Pancreas (tissue), 10 donors: ENCODE measurements at regions of chr9 and their contacts with region 1.

Region 1: GRCh38 chr9:113657703-113658544 is 194.4 kb downstream of the RGS3 start:
- DNase-seq: peak; percentile 76 to 93 (median 90)
- ATAC-seq: peak; percentile 91 to 95 (median 93)
- H3K4me3 ChIP-seq: no peak overlapping the region
- H3K27ac ChIP-seq: no peak overlapping the region
- H3K4me1 ChIP-seq: no peaks in the 10 kb centered on the region
- H3K27me3 ChIP-seq: no peaks in the 10 kb centered on the region
- CTCF ChIP-seq: peak; percentile 83 to 98 (median 93)

Region 2: DNA sequence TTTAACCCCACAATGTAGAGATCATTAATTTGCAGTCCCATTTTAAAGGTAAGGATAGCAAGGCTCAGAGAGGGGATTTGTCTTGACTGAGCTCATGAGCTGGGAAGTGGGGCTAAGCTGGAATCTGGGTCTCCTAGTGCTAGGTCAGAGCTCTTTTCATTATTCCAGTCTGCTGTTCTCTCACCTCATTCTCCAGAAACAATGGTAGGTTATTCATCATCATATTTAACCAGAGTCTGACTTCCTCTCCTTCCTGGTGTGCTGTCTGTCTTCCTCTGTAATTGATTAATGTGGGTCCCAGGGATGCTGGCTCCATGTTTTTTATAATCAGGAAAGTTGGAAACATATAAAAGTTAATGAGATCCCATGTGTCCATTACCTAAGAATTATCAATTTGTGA is 226.7 kb before region 1 on chr9:
- intact Hi-C with region 1: loop called in 2 of 3 experiments (anchors 5 kb)
- DNase-seq: no peak
- ATAC-seq: no peak
- H3K4me3 ChIP-seq: no peak overlapping the region
- H3K27ac ChIP-seq: no peak overlapping the region
- H3K4me1 ChIP-seq: no peaks in the 10 kb centered on the region
- H3K27me3 ChIP-seq: no peaks in the 10 kb centered on the region
- CTCF ChIP-seq: no peak

Region 3: GRCh38 chr9:113446323-113446740 is 211.6 kb before region 1 on chr9:
- intact Hi-C with region 1: loop called (anchors 2 to 10 kb)
- DNase-seq: no peak
- ATAC-seq: peak; percentile 64 to 85 (median 78)
- H3K4me3 ChIP-seq: no peak overlapping the region
- H3K27ac ChIP-seq: no peak overlapping the region
- H3K4me1 ChIP-seq: no peaks in the 10 kb centered on the region
- H3K27me3 ChIP-seq: no peaks in the 10 kb centered on the region
- CTCF ChIP-seq: peak; percentile 41 to 59 (median 52)

Region 4: DNA sequence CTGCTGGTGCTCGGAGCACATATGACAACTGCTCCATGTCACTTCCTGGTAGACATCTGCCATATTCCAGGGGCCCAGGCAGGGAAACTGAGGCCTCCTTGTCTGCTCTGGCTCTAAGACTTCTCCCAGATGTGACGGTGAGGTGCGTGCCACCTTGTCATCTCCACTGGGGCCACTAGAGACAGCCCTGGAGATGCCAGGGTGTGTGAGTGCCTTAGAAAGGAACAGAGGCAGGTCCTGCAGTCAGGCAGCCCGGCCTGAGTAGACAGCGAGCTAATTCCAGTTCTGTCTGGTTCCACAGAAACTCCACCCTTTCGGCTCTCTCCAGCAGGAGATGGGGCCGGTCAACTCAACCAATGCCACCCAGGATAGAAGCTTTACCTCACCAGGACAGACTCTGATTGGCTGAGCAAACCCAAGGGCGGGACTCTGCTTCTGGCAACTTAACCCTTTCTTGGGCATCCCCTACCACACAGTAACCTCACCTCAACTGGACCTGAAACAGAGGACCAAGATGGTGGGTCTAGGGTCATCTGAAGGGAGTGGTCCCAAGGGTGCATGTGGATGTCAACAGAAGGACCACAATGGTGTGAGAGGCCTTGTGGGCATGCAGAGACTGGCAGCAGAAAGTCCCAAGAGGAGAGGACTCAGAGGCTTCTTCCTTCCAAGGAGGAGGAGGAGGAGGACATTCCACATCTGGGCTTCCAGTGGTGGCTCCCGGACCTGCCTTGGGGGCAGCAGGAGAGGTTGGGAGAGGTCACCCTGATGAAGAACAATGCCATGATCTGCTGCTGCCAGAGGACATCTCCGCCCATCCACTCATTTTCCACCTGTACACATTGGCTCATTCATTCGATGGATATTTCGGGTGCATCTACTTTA is 116.7 kb before region 1 on chr9:
- intact Hi-C with region 1: no loop called
- DNase-seq: peak in 3 of 6 donors; percentile 49 to 73 (median 55)
- ATAC-seq: peak; percentile 49 to 85 (median 72)
- H3K4me3 ChIP-seq: no peak overlapping the region
- H3K27ac ChIP-seq: no peak overlapping the region
- H3K4me1 ChIP-seq: peaks cover 6 to 27% (median 11%) of the 10 kb centered on the region in 3 donors
- H3K27me3 ChIP-seq: no peaks in the 10 kb centered on the region
- CTCF ChIP-seq: no peak

Region 5: GRCh38 chr9:113591001-113591898 is 66.7 kb before region 1 on chr9:
- intact Hi-C with region 1: loop called in 2 of 3 experiments (anchors 2 to 5 kb)
- DNase-seq: peak; percentile 68 to 92 (median 82)
- ATAC-seq: peak in 3 of 4 donors; percentile 45 to 64 (median 55)
- H3K4me3 ChIP-seq: no peak overlapping the region
- H3K27ac ChIP-seq: peak overlapping the region in 2 of 4 donors; percentile 9 to 31
- H3K4me1 ChIP-seq: peaks cover 0 to 29% (median 17%) of the 10 kb centered on the region in 3 donors
- H3K27me3 ChIP-seq: no peaks in the 10 kb centered on the region
- CTCF ChIP-seq: peak; percentile 82 to 87 (median 85)

Region 6: GRCh38 chr9:113807173-113808061 is 149.5 kb after region 1 on chr9:
- intact Hi-C with region 1: no loop called
- DNase-seq: peak in 5 of 6 donors; percentile 31 to 72 (median 51)
- ATAC-seq: peak; percentile 70 to 97 (median 94)
- H3K4me3 ChIP-seq: peak overlapping the region in 2 of 4 donors; percentile 29 to 40
- H3K27ac ChIP-seq: no peak overlapping the region
- H3K4me1 ChIP-seq: no peaks in the 10 kb centered on the region
- H3K27me3 ChIP-seq: no peaks in the 10 kb centered on the region
- CTCF ChIP-seq: peak; percentile 74 to 90 (median 82)

Region 7: DNA sequence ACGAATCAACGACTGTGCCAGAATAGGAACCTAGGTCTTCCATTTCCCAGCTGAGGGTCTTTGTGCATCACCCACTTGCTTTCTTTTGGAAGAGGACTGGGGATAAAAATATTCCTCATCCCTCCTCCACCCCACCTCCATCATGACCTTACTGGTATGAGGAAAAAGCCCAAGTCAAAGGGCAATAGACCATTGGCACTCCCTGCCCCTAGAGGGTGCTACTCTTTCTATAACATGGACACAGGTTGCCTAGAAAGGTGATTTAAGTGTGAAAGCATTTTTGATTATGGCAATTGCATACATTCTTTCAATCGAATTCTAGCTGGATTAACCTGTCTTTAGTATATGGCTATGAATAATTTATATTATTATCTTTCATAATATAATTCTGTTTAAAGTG is 195.4 kb after region 1 on chr9:
- intact Hi-C with region 1: no loop called
- DNase-seq: peak in 2 of 6 donors; percentile 9 to 46
- ATAC-seq: peak; percentile 55 to 93 (median 86)
- H3K4me3 ChIP-seq: no peak overlapping the region
- H3K27ac ChIP-seq: no peak overlapping the region
- H3K4me1 ChIP-seq: no peaks in the 10 kb centered on the region
- H3K27me3 ChIP-seq: no peaks in the 10 kb centered on the region
- CTCF ChIP-seq: peak; percentile 21 to 54 (median 38)